Esophagus squamous epithelium (tissue), 5 donors: ENCODE measurements at regions of chr11 and their contacts with region 1.

Region 1: GRCh38 chr11:34480314-34480713 is 33.3 kb downstream of the ELF5 start:
- DNase-seq: no peak
- H3K4me3 ChIP-seq: no peak overlapping the region
- H3K27ac ChIP-seq: no peak overlapping the region
- H3K4me1 ChIP-seq: peaks cover 0 to 5% (median 0%) of the 10 kb centered on the region in 3 donors
- H3K27me3 ChIP-seq: peaks cover 0 to 18% (median 0%) of the 10 kb centered on the region in 4 donors
- CTCF ChIP-seq: no peak
- POLR2A ChIP-seq: no peak

Region 2: DNA sequence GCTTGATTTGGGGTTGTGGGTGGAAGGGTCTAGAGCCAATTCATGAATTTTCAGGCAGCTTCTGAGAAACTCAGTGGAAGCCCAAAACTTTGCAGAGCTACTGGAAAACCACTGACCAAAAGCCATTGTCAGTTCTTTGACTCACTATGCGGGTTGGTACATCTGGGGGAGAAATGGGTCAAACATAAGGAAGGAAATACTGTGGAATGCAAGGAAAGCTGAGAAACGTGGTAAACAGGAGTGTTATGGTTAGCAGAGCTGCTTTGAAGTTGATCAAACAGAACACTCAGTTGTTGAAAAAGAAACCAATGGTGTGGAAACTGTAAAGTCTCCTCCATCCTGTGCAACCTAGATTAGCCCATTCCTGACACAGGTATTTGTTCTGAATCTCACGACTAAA is 116.2 kb before region 1 on chr11:
- intact Hi-C with region 1: loop called (anchors 5 kb)
- DNase-seq: no peak
- H3K4me3 ChIP-seq: no peak overlapping the region
- H3K27ac ChIP-seq: no peak overlapping the region
- H3K4me1 ChIP-seq: peaks cover 0 to 6% (median 2%) of the 10 kb centered on the region in 3 donors
- H3K27me3 ChIP-seq: peaks cover 0 to 48% (median 1%) of the 10 kb centered on the region in 4 donors
- CTCF ChIP-seq: no peak
- POLR2A ChIP-seq: no peak